ENCODE measurements at regions of chr22 and their contacts with region 1.

Region 1: DNA sequence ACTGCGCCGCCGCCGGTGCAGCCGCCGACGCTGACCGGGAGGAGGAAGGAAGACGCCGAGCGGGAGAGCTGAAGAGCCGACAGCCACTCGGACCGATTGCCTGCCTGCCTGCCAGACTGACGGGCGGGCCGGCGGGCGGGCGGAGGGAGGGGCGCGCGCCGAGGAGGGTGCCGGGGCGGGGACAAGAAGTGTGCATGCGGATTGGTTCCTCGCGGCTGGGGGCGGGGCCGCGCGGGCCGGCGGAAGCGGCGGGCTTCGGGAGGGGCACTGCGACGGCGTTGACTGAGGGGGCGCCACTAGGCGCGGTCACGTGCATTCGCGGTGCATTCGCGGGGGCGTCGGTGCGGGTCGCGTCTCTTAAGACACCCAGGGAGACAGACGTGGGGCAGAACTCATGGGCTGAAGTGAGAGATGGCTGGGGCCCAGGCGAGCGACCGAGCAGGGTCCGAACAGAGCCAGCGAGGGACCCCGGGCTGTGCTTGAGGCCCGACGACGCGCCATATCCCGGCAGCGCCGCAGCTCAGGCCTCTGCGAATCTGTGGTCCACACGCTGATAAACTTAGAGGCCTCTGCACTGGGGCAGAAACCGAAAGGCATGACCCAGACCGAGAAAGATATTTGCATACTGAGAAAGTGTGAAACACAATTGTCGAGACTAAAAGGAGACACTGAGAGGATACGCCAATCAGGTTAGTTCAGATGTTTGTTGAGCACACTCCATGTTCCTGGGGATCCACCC is at the start of gene MAPK1:
- DNase-seq: peak; percentile 97
- ATAC-seq: peak; percentile 89
- H3K4me3 Mint-ChIP-seq: peak within 1 kb of the TSS; percentile 93
- H3K27ac Mint-ChIP-seq: peak within 1 kb of the TSS; percentile 99
- H3K4me1 Mint-ChIP-seq: peaks cover 38% of the 10 kb centered on the region
- H3K27me3 Mint-ChIP-seq: peaks cover 5% of the 10 kb centered on the region
- total RNA-seq, gene MAPK1: 91.9 to 108 TPM

Region 2: GRCh38 chr22:20916983-20917810 is 950.5 kb before region 1 on chr22 and contains the start of gene CRKL:
- CTCF ChIA-PET with region 1: no interaction called
- POLR2A ChIA-PET with region 1: no interaction called
- intact Hi-C with region 1: loop called in 1 of 2 experiments (anchors 2 kb)
- DNase-seq: peak; percentile 98
- ATAC-seq: peak; percentile 98
- H3K4me3 Mint-ChIP-seq: peak within 1 kb of the TSS; percentile 99
- H3K27ac Mint-ChIP-seq: peak within 1 kb of the TSS; percentile 93
- H3K4me1 Mint-ChIP-seq: peaks cover 27% of the 10 kb centered on the region
- H3K27me3 Mint-ChIP-seq: no peaks in the 10 kb centered on the region
- total RNA-seq, gene CRKL: 80.8 to 92.0 TPM

Region 3: DNA sequence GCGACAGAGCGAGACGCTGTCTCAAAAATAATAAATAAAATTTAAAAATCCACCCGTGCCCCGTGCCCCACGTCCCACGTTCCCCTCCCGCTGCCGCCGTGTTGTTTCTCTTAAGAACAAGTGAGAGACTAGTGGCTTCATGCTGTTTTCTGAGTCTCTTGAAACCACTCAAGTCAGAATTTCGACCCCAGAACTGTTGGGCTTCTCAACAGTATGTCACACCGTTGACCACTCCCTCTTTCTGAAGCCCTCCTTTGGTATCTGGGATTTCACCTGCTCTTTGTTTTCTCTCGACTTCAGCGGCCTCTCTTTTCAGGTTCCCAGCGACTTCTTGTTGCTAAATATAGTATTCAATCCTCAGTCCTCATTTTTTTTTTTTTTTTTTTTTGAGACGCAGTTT is 200.9 kb before region 1 on chr22:
- CTCF ChIA-PET with region 1: interaction called, 3 read pairs
- POLR2A ChIA-PET with region 1: no interaction called
- intact Hi-C with region 1: loop called in 1 of 2 experiments (anchors 2 kb)
- DNase-seq: no peak
- ATAC-seq: no peak
- H3K4me3 Mint-ChIP-seq: peak overlapping the region; percentile 93
- H3K27ac Mint-ChIP-seq: peak overlapping the region; percentile 96
- H3K4me1 Mint-ChIP-seq: peaks cover 27% of the 10 kb centered on the region
- H3K27me3 Mint-ChIP-seq: no peaks in the 10 kb centered on the region

Region 4: GRCh38 chr22:21760640-21761039 is 107.1 kb before region 1 on chr22:
- CTCF ChIA-PET with region 1: no interaction called
- POLR2A ChIA-PET with region 1: interaction called, 3 read pairs
- intact Hi-C with region 1: loop called in 1 of 2 experiments (anchors 1 kb)
- DNase-seq: no peak
- ATAC-seq: no peak
- H3K4me3 Mint-ChIP-seq: no peak overlapping the region
- H3K27ac Mint-ChIP-seq: no peak overlapping the region
- H3K4me1 Mint-ChIP-seq: peaks cover 50% of the 10 kb centered on the region
- H3K27me3 Mint-ChIP-seq: no peaks in the 10 kb centered on the region

Region 5: GRCh38 chr22:21791635-21792625 is 75.8 kb before region 1 on chr22:
- CTCF ChIA-PET with region 1: no interaction called
- POLR2A ChIA-PET with region 1: no interaction called
- intact Hi-C with region 1: loop called in 1 of 2 experiments (anchors 2 kb)
- DNase-seq: peak; percentile 70
- ATAC-seq: peak; percentile 93
- H3K4me3 Mint-ChIP-seq: peak overlapping the region; percentile 15
- H3K27ac Mint-ChIP-seq: peak overlapping the region; percentile 56
- H3K4me1 Mint-ChIP-seq: peaks cover 16% of the 10 kb centered on the region
- H3K27me3 Mint-ChIP-seq: no peaks in the 10 kb centered on the region

Region 6: DNA sequence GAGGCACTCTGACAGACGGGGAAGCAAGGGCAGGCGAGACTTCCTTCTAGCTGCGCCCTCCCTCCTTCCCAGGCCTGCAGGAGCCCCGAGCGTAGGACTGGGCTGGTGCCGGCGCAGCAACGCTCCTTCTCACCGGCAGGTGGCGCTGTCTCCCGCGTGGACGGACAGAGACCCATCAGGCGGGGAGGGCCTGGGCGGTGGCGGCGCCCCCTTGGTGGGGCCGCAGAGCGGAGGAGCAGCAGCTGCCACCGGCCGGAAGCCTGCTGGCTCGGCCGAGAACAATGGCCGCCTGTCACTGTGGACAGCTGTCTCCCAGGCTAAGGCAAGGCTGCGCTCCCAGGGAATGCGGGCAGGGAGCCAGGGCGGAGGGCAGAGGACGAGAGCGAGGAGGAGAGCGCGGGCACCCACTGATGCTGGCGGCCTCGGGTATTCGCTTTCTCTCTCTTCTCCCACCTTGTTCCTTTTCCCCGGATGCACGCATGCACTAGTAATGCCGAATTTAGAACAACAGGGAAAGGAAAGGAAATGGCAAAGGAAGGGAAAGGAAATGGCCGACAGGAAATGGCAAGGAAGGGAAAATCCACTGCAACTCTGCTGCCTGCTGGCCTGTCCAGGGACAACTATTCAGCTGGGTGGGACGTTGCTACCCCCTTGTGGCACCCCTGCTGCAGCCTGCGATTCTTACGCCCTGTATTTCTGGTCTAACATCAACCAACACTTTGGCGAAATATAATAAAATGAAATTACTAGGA is 70.5 kb after region 1 on chr22:
- CTCF ChIA-PET with region 1: interaction called, 3 read pairs
- POLR2A ChIA-PET with region 1: no interaction called
- intact Hi-C with region 1: loop called (anchors 1 to 5 kb)
- DNase-seq: peak; percentile 95
- ATAC-seq: peak; percentile 95
- H3K4me3 Mint-ChIP-seq: peak overlapping the region; percentile 67
- H3K27ac Mint-ChIP-seq: peak overlapping the region; percentile 79
- H3K4me1 Mint-ChIP-seq: peaks cover 43% of the 10 kb centered on the region
- H3K27me3 Mint-ChIP-seq: no peaks in the 10 kb centered on the region

Region 7: DNA sequence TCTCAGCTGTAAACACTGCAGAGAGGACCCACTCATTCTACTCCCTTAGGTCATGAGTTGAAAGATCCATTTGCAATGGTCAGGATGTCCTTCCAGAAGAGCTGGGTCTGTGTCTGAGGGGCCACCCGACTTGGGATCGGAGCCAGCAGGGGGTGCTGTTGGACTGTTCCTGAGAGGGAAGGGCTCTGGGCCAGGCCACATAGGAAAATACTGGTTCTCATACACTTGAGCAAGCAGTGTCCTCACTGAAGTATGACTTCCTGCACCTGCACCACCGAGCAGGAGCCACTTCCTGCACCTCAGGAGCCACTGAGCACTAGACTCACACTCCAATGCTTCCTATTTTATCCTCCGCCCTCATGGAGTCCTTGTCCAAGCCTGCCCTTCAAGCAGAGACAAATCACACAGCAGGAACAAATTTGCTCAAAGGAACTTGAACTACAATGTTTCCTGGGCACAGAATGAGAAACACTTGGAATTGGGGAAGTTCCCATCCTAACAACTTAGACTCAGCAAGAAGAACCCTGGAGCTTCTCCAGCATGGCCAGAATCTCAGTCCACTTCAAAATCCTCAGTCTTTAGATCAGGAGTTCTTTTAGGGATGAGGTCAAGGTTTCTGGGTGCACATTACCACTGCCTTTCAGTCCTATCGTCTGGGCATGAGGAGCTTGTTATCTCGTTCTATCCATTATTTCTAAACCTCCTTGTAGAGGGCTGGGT is 340.3 kb after region 1 on chr22:
- CTCF ChIA-PET with region 1: no interaction called
- POLR2A ChIA-PET with region 1: no interaction called
- intact Hi-C with region 1: loop called in 1 of 2 experiments (anchors 5 kb)
- DNase-seq: peak; percentile 93
- ATAC-seq: peak; percentile 60
- H3K4me3 Mint-ChIP-seq: no peak overlapping the region
- H3K27ac Mint-ChIP-seq: peak overlapping the region; percentile 66
- H3K4me1 Mint-ChIP-seq: peaks cover 38% of the 10 kb centered on the region
- H3K27me3 Mint-ChIP-seq: no peaks in the 10 kb centered on the region

Measured in activated CD4-positive, alpha-beta T cell treated with anti-CD3 and anti-CD28 coated beads for 36 hours (primary cell).